ENCODE measurements at regions of chr9 and their contacts with region 1.

Region 1: GRCh38 chr9:135864447-135865049 is 42.8 kb downstream of the CAMSAP1 start:
- DNase-seq: no peak
- H3K4me3 ChIP-seq: no peak overlapping the region
- H3K27me3 ChIP-seq: no peaks in the 10 kb centered on the region
- CTCF ChIP-seq: peak; percentile 96

Region 2: GRCh38 chr9:135827866-135828580 is 36.5 kb before region 1 on chr9:
- CTCF ChIA-PET with region 1: no interaction called
- POLR2A ChIA-PET with region 1: no interaction called
- DNase-seq: no peak
- H3K4me3 ChIP-seq: no peak overlapping the region
- H3K27me3 ChIP-seq: no peaks in the 10 kb centered on the region
- CTCF ChIP-seq: no peak

Region 3: DNA sequence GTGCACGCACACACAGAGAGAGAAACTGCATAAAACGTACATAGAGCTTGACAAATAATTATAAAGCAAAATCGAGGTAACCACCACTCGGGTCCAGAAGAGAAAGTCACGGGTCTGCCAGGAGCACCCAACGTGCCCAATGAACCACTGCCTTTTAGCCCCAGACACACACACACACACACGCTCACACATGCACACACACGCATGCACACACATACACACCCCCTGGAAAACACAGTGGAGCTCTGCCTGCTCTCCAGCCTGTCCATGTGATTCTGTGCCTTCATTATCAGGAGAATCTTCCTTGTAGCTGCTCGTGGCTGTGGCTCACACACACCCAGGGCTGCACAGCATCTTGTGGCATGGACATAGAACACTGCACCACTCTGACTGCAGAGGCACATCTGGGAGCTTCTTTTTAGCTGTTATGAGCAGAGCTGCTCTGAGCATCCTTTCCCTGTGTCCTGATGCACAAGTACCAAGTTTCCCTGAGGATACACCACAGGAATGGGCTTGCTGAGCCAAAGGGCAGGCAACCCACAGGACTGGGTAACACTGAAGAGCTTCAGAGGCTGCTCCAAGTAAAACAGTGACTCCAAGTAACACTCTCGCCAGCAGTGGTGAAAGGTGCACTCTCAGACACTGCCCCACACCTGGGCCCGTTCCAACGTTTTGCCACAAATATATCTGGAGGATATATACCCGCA is 16.1 kb before region 1 on chr9:
- CTCF ChIA-PET with region 1: interaction called, 17 read pairs
- POLR2A ChIA-PET with region 1: no interaction called
- DNase-seq: no peak
- H3K4me3 ChIP-seq: no peak overlapping the region
- H3K27me3 ChIP-seq: no peaks in the 10 kb centered on the region
- CTCF ChIP-seq: no peak

Region 4: DNA sequence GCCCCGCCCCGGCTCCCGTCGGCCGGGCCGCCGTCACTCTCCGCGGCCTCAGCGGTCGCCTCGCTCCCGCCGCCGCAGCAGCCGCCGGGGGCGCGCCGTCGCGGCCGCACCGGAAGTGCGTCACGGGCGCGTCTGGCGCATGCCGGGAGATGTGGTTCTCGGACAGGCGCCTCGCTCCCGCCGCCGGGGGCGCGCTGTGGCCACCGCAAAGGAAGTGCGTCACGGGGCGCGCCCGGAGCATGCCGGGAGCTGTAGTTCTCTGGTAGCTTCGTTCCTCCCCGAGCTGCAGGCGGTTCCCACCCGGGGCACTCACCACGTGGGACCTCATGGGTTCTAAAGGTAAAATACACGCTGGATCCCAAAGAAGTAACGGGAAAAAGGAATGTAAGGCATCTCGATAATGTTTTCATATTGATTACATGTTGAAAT is 96.7 kb after region 1 on chr9 and contains the start of gene UBAC1:
- CTCF ChIA-PET with region 1: interaction called, 15 read pairs
- POLR2A ChIA-PET with region 1: no interaction called
- DNase-seq: peak; percentile 58
- H3K4me3 ChIP-seq: peak within 1 kb of the TSS; percentile 88
- H3K27me3 ChIP-seq: peaks cover 5% of the 10 kb centered on the region; the same call in 1 of the 2 replicates
- CTCF ChIP-seq: peak; percentile 41
- polyA plus RNA-seq, gene UBAC1: 42.1 and 50.2 TPM in 2 replicates